ENCODE measurements at regions of chr19 and their contacts with region 1.

Region 1: DNA sequence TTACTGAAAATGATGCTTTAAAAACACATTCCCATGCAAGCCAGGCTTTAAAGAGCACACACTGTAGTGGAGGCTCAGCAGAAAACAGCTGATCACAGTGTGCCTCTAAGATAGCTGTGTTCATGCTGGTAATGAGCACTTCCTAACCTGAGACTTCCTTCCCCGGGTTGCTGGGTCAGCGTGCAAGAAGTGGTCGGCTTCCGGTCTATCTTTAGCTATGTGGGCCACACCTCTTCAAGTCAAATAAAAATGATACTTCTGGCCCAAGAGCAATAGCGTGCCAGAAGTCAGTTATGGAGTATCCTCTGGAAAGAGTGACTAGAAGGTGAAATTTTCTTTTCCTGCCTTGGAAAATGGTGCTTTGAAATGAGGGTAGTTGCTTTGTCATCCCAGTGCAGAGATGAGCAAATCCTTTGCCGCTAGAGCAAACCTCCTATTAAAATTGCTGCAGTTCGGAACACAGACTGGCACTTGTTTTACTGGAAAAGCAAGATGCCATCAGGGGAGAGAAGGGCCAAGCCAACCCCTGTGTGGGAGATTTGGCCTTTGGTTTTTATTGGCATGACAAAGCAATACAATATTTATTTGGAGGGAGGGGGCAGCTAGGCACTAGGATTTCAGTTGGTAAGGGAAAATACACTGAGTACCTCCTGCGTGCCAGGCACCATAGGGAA is 64.2 kb downstream of the ARHGAP35 start:
- DNase-seq: peak in 1 of 6 donors; percentile 19
- ATAC-seq: peak; percentile 37 to 58 (median 50)
- H3K4me3 ChIP-seq: no peak overlapping the region
- H3K27ac ChIP-seq: peak overlapping the region in 2 of 4 donors; percentile 14 to 64
- H3K4me1 ChIP-seq: peaks cover 15 to 28% (median 17%) of the 10 kb centered on the region in 3 donors
- H3K27me3 ChIP-seq: no peaks in the 10 kb centered on the region
- CTCF ChIP-seq: no peak

Region 2: GRCh38 chr19:46860125-46860845 is 64.7 kb before region 1 on chr19:
- intact Hi-C with region 1: loop called in 1 of 3 experiments (anchors 10 kb)
- DNase-seq: peak; percentile 95 to 99 (median 98)
- ATAC-seq: peak; percentile 84 to 91 (median 87)
- H3K4me3 ChIP-seq: peak overlapping the region; percentile 79 to 95 (median 88)
- H3K27ac ChIP-seq: peak overlapping the region; percentile 94 to 99 (median 97)
- H3K4me1 ChIP-seq: peaks cover 13 to 38% (median 24%) of the 10 kb centered on the region in 3 donors
- H3K27me3 ChIP-seq: no peaks in the 10 kb centered on the region
- CTCF ChIP-seq: no peak

Region 3: GRCh38 chr19:46975925-46976782 is 51.1 kb after region 1 on chr19:
- intact Hi-C with region 1: no loop called
- DNase-seq: peak; percentile 84 to 97 (median 92)
- ATAC-seq: peak; percentile 92 to 95 (median 94)
- H3K4me3 ChIP-seq: no peak overlapping the region
- H3K27ac ChIP-seq: peak overlapping the region; percentile 42 to 81 (median 62)
- H3K4me1 ChIP-seq: peaks cover 32 to 34% (median 33%) of the 10 kb centered on the region in 3 donors
- H3K27me3 ChIP-seq: no peaks in the 10 kb centered on the region
- CTCF ChIP-seq: no peak